Posterior vena cava (tissue), 2 donors: ENCODE measurements at regions of chr14 and their contacts with region 1.

Region 1: DNA sequence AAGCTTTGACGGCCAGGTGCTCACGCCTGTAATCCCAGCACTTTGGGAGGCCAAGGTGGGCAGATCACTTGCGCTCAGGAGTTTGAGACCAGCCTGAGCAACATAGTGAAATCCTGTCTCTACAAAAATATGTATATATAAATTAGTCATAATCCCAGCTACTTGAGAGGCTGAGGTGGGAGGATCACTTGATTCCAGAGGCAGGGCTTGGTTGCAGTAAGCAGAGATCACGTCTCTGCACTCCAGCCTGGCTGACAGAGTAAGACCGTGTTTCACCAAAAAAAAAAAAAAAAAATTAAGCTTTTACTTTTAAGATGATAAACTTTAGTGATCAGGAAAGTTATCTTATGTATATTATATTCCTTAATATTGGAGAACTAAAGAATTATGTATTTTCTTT is 18.0 kb upstream of the SNAPC1 start:
- DNase-seq: no peak

Region 2: DNA sequence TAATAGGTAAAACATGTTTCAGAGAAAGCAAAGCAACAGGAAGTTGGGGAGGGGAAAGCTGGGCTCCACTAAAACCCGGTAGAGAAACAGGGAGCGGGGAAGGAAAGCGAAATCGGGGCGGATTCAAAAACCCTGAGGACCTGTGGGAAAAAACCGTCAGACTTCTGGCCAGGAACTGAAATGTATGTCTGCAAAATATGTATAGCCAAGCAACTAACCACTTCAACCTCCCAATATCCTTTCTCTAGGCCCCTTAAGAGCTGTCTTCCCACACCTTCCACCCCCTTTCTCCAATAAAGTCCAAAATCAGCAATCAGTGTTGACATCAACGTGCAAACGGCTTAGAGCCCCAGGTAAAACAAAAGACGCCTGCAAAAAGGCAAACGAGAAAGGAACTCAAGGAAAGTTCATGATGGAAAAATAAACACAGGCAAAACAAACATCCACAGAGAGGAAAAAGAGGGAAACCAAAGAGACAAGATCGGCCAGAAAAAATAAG is 1127.7 kb before region 1 on chr14:
- intact Hi-C with region 1: loop called in 1 of 2 experiments (anchors 5 kb)
- DNase-seq: no peak

Region 3: GRCh38 chr14:61585598-61586543 is 158.4 kb before region 1 on chr14:
- intact Hi-C with region 1: no loop called
- DNase-seq: peak; percentile 92

Region 4: DNA sequence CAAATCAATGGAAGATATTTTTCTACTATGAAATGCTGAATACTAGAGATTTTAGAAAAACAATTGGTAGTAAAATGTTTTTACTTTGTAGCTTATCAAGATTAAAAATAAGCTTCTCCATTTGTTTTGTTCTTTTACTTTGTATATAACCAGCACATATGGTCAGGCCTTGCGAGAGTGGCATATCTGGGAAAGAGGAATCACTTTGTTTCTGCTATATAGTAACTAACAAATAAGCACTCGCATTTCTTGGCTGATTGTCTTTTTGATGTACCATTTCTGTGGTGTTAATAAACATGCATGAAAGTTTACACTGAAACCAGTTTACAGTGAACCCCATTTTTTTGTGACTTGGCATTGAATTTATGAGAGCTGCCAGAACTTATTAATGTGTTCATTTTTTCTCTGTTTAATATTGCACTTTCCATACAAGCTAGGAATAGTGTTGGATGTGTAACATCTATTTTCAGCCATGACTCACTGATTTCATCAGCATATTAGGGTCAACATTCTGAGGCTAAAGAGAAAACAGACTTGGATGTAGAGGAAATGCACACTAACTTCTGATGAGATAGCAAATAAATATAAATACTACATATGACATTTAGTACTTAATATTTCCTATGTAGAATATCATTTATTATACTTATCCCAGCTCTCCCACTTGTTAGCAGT is 665.5 kb after region 1 on chr14:
- intact Hi-C with region 1: no loop called
- DNase-seq: no peak

Region 5: DNA sequence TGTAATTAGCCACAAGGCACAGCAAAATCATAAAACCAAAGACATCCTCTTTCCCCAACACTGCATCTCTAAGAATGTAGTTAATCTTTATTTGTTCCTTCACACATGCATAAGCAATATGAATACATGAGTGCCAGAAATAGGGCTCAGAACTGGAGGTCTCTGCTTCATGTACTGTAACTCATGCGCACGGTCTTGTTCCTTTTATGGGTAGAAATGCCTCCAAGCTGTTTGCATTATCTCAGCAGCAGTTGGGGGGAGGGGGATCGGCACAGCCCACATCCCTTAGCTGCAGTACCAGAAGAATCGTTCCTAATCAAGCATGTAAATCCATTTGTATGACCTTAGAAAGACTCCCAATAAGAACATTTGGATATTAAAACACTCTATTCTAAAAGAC is 1480.0 kb after region 1 on chr14:
- intact Hi-C with region 1: no loop called
- DNase-seq: no peak